Caco-2 (cell line): ENCODE measurements at regions of chr16 and their contacts with region 1.

Region 1: GRCh38 chr16:86343027-86343787 is 167.1 kb upstream of the FOXF1 start:
- DNase-seq: peak in 1 of 2 experiments; percentile 12
- H3K4me3 ChIP-seq: no peak overlapping the region
- H3K4me3 Mint-ChIP-seq: no peak overlapping the region
- H3K27ac Mint-ChIP-seq: no peak overlapping the region
- H3K4me1 ChIP-seq: no peaks in the 10 kb centered on the region
- H3K4me1 Mint-ChIP-seq: no peaks in the 10 kb centered on the region
- H3K27me3 ChIP-seq: 0 out of 2 replicates have a peak, but pooled peaks cover 1% of the 10 kb centered on the region
- H3K27me3 Mint-ChIP-seq: peaks cover 32% of the 10 kb centered on the region
- CTCF ChIP-seq: no peak

Region 2: GRCh38 chr16:86072328-86073102 is 270.7 kb before region 1 on chr16:
- CTCF ChIA-PET with region 1: no interaction called
- POLR2A ChIA-PET with region 1: no interaction called
- intact Hi-C with region 1: loop called (anchors 10 kb)
- DNase-seq: peak; percentile 72 to 78
- H3K4me3 ChIP-seq: no peak overlapping the region
- H3K4me3 Mint-ChIP-seq: no peak overlapping the region
- H3K27ac Mint-ChIP-seq: no peak overlapping the region
- H3K4me1 ChIP-seq: no peaks in the 10 kb centered on the region
- H3K4me1 Mint-ChIP-seq: no peaks in the 10 kb centered on the region
- H3K27me3 ChIP-seq: no peaks in the 10 kb centered on the region
- H3K27me3 Mint-ChIP-seq: no peaks in the 10 kb centered on the region
- CTCF ChIP-seq: peak; percentile 91 to 96